ENCODE measurements at regions of chr2 and their contacts with region 1.

Region 1: GRCh38 chr2:198309673-198310280 is 505.4 kb downstream of the PLCL1 start:
- DNase-seq: no peak
- H3K4me3 ChIP-seq: no peak overlapping the region
- H3K27ac ChIP-seq: no peak overlapping the region
- H3K4me1 ChIP-seq: peaks cover 0 to 3% (median 0%) of the 10 kb centered on the region in 6 donors
- H3K27me3 ChIP-seq: peaks cover 0 to 41% (median 5%) of the 10 kb centered on the region in 7 donors
- CTCF ChIP-seq: peak in 10 of 11 experiments; percentile 26 to 81 (median 74)
- POLR2A ChIP-seq: no peak

Region 2: GRCh38 chr2:198916548-198917080 is 606.8 kb after region 1 on chr2:
- intact Hi-C with region 1: no loop called
- DNase-seq: no peak
- H3K4me3 ChIP-seq: no peak overlapping the region
- H3K27ac ChIP-seq: no peak overlapping the region
- H3K4me1 ChIP-seq: no peaks in the 10 kb centered on the region
- H3K27me3 ChIP-seq: no peaks in the 10 kb centered on the region
- CTCF ChIP-seq: no peak
- POLR2A ChIP-seq: no peak

Region 3: DNA sequence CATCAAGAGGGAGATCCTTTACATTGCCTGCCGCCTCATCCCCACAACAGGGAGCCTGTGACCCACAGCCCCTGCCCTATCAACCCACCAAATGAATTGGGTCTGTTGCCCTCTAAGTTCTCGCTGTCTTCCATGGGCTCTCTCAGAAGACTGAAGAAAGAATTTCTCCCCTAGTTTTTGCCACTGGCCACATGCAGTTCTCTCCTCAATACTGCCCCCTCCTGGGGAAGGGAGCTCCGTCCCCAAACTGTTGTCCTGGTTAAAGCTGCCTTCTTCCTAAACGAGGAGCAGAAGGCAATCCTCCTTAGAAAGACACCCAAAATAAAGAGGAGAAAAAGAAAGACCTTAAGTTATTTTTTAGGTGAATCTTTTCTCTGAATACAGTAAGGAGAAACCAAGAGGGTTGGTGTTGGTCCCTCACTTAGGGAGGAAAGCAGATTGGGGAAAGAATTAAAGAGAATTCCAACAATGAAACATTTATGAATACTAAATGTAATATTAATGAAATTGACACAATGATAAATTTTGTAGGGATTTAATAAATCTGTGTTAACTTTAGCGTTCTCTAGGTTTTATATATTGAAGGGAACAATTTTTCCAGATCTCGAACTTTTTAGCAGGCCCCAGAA is 1179.1 kb after region 1 on chr2:
- intact Hi-C with region 1: loop called (anchors 10 kb)
- DNase-seq: no peak
- H3K4me3 ChIP-seq: no peak overlapping the region
- H3K27ac ChIP-seq: no peak overlapping the region
- H3K4me1 ChIP-seq: no peaks in the 10 kb centered on the region
- H3K27me3 ChIP-seq: peaks cover 0 to 31% (median 0%) of the 10 kb centered on the region in 7 donors
- CTCF ChIP-seq: peak in 9 of 11 experiments; percentile 27 to 76 (median 61)
- POLR2A ChIP-seq: no peak

Region 4: GRCh38 chr2:199739413-199740110 is 1429.8 kb after region 1 on chr2:
- intact Hi-C with region 1: loop called (anchors 5 kb)
- DNase-seq: peak; percentile 85
- H3K4me3 ChIP-seq: peak overlapping the region in 1 of 8 donors; percentile 28
- H3K27ac ChIP-seq: peak overlapping the region in 4 of 8 donors; percentile 3 to 42 (median 25)
- H3K4me1 ChIP-seq: peaks cover 0 to 18% (median 12%) of the 10 kb centered on the region in 6 donors
- H3K27me3 ChIP-seq: peaks cover 0 to 21% (median 0%) of the 10 kb centered on the region in 7 donors
- CTCF ChIP-seq: peak; percentile 76 to 94 (median 89)
- POLR2A ChIP-seq: no peak

Measured in spleen (tissue), 13 donors.